RWPE1 (cell line): ENCODE measurements at regions of chr17 and their contacts with region 1.

Region 1: DNA sequence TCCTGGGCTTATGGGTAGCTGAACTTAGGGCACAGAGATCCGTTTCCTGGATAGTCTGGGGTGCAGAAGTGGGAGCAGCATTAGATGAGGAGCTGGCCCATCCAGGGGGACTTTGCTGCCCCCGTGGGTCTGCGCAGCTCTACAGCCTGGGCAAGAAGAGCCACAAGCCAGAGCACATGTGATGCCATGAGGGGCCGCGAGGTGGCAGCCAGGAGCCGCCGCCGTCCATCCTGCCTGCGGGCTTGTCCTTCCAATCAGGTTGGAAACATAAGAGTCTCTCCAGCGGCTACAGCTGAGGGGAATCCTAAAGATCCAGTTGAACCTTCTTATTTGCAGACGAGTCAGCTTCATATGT is 21.9 kb downstream of the C1QTNF1 start:
- DNase-seq: peak; percentile 71
- H3K27ac ChIP-seq: no peak overlapping the region
- CTCF ChIP-seq: peak; percentile 98

Region 2: DNA sequence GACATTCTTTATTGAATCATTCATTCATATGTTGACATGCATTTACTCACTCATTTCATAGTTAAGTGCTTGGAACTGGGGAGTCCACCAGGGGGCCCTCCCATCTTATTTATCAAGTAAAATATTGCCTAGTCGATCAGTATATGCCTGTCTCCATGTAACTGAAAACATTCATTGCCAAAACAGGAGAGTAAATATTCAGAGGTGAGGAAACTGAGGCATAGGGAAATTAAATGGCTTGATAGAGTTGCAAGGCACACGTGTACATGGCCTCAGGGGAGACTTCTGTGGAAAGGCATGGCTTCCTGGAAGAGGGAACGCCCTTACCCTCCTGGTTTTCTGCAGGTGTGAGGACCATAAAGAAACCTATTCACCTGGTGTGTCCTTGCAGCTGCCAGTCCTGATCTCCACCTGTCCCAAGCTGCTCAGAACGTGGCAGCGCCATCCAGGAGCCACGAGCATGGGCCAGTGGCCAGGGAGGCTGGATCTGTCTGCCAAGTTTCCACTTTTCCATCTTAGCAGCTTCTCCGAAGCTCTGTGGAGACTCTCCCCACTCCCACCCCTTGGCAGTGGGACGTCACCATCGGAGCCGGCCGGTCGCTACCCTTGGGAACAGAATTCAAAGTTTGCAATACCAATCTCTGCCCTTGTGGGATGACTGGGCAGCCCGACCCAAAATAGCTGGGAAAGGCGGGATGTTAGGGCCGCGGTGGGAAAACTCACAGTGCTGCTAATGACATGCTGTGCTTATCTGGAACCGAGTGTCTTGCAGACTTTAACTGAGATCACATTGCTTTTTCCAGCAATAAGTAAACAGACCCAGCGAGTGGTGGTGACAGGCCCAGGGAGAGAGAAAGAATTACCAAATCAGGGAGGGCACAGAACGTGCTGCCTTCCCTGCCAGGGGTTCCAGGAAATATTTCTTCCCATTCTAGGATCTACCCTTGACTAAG is 25.9 kb before region 1 on chr17:
- CTCF ChIA-PET with region 1: interaction called, 18 read pairs
- POLR2A ChIA-PET with region 1: no interaction called
- DNase-seq: peak; percentile 68
- H3K27ac ChIP-seq: no peak overlapping the region
- CTCF ChIP-seq: peak; percentile 84

Region 3: GRCh38 chr17:79082311-79083190 is 36.7 kb after region 1 on chr17:
- CTCF ChIA-PET with region 1: interaction called, 26 read pairs
- POLR2A ChIA-PET with region 1: no interaction called
- DNase-seq: peak; percentile 66
- H3K27ac ChIP-seq: no peak overlapping the region
- CTCF ChIP-seq: peak; percentile 94

Region 4: DNA sequence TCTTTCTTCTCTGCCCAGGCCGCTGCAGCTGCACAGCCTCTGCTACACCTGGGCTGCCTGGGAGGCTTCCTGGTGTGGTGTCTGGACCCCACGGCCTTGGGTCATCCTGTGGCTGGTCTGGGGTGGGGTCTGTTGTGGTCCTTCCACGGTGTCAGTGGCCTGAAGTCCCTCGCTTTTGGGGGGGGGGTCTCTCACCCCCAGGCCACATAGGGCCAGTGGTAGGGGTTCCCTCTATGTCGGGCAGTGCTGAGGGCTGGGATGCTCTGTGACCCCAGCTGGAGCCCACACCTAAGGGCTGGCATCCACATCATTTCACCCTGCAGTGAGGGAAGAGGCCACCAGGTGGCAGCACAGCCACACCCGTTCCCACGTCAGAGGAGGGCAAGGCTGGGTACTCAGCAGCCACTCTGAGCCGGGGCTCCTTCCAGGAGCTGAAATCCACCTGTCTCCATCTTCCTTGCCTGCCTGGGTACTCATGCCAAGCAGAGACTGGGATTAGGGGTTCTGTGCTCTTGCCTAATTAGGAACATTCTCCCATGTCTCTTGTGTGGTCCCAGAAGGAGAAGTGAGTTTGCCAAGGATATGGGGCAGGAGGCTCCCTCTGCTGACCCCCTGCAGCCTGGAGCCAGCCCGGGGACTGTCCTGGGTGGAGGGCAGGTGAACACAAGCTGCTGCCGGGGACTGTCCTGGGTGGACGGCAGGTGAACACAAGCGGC is 41.8 kb after region 1 on chr17:
- CTCF ChIA-PET with region 1: interaction called, 26 read pairs
- POLR2A ChIA-PET with region 1: no interaction called
- DNase-seq: peak; percentile 74
- H3K27ac ChIP-seq: no peak overlapping the region
- CTCF ChIP-seq: peak; percentile 94

Region 5: DNA sequence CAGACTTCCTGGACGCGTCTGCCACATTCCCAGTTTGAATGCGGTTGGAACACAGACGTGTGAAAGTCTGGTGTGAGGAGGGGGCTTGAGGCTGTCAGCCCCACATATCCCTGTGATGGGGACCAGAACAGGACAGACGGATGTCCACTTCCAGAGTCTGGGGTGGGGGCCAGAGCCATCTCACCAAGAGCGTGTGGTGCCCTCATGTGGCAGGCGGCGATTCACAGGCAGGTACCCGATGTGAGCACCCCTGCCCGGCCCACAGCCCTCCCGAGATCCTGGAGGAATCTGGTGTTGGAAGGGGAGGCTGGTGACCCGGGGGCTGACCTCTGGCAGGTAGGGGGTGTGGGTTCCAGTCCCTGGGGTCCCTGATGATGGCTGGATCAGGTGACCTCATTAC is 80.3 kb after region 1 on chr17:
- CTCF ChIA-PET with region 1: no interaction called
- POLR2A ChIA-PET with region 1: no interaction called
- DNase-seq: no peak
- H3K27ac ChIP-seq: no peak overlapping the region
- CTCF ChIP-seq: no peak; the same call in 1 of the 2 replicates